GM18951 (cell line): ENCODE measurements at regions of chr11 and their contacts with region 1.

Region 1: GRCh38 chr11:16809886-16810668 is 71.6 kb downstream of the C11orf58 start:
- POLR2A ChIP-seq: no peak

Region 2: GRCh38 chr11:16392616-16393015 is 417.5 kb before region 1 on chr11:
- in situ Hi-C with region 1: no loop called
- POLR2A ChIP-seq: no peak

Region 3: DNA sequence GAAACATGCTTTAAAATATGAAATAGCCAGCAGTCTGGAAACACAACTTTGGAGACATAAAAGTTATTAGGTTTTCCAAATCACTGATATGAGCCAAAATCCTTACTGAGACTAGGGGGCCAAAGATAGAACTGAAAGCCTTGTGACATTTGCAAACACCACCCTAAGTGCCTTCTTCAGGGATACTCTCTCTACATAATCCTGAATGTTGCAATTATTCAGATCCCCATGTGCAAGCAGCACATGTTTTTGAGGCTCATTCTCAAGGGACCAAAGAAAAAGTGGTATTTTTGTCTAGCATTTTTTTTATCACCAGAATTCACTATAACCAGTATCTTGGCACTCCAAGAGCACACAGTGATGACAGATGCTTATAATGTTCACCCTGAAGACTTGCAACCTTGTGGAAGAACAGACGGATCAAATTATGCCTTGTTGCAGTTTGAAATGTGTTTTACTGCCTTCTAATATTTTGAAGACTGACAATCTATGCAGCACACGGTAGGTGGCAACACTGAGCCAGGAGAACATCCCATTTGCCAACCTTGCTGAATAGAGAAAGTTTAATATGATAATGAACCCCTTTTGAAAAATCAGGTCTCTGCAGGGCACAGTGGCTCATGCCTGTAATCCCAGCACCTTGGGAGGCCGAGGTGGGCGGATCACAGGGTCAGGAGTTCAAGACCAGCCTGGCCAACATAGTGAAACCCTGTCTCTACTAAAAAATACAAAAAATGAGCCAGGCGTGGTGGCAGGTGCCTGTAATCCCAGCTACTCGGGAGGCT is 125.6 kb after region 1 on chr11:
- in situ Hi-C with region 1: loop called (anchors 10 kb)
- POLR2A ChIP-seq: no peak